Mammary epithelial cell (primary cell): ENCODE measurements at regions of chr3 and their contacts with region 1.

Region 1: DNA sequence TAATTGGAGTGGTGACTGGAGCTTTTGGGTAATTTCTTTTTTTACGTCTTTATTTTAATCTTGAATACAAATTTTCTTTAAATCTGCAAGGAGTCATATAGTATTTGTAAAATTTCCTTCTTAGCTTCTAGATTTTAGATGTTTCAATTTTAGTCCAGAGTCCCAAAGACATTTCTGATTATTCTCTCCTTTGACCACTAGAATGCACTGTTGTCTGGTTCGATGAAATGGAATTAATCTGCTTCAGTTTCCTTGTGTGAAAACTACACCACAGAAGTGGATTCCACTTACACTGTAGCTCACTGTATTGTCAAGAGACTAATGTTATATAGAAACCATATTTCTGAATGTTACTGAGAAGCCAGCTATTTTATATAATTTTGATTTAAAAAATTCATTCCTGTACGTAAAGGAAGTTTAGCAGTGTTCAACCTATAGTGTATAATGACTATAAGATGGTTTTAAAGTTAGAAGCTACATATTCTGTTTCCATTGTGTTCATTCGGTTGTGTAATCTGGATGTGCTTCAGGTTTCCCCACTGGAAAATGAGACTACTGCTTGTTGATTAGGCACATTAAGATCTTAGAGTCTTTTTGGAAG is 6.1 kb downstream of the GRAMD1C start:
- DNase-seq: peak; percentile 35
- H3K4me3 ChIP-seq: no peak overlapping the region
- H3K27ac ChIP-seq: no peak overlapping the region
- H3K4me1 ChIP-seq: peaks cover 11% of the 10 kb centered on the region
- H3K27me3 ChIP-seq: no peaks in the 10 kb centered on the region
- CTCF ChIP-seq: peak; percentile 53 to 61

Region 2: DNA sequence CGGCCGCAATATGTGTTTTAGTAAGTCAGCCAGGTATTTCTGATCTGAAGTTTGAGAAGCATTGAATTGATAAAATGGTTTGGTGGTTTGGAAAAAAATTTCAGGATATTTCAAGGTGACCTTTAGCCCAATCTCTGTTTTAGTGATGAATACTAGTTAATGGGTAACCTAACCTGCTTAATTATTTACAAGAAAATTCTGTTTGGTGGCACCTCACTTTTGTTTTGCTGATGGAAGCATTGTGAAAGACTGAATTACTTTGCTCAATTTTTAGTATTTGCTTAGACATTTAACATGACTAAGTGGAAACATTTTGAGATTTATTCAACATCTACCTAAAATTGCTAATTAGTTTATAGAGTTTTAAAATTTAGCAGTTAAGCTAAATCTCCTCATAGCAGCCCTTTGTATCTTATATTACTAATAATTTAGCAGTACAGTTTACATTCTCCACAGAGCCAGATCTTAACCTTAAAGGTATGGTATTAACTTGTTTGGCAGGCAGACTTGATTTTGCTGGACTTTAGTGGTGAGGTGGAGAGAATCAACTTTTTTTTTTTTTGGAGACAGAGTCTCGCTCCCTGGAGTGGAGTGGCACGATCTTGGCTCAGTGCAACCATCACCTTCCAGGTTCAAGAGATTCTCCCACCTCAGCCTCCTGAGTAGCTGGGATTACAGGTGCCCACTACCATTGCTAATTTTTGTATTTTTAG is 29.2 kb after region 1 on chr3:
- CTCF ChIA-PET with region 1: no interaction called
- dilution Hi-C with region 1: no loop called
- in situ Hi-C with region 1: no loop called
- intact Hi-C with region 1: no loop called
- DNase-seq: no peak
- H3K4me3 ChIP-seq: no peak overlapping the region
- H3K27ac ChIP-seq: no peak overlapping the region
- H3K4me1 ChIP-seq: no peaks in the 10 kb centered on the region
- H3K27me3 ChIP-seq: no peaks in the 10 kb centered on the region
- CTCF ChIP-seq: no peak

Region 3: GRCh38 chr3:113912552-113913236 is 68.0 kb after region 1 on chr3:
- CTCF ChIA-PET with region 1: interaction called, 5 read pairs
- dilution Hi-C with region 1: no loop called
- in situ Hi-C with region 1: loop called (anchors 5 kb)
- intact Hi-C with region 1: loop called (anchors 1 kb)
- DNase-seq: peak; percentile 78
- H3K4me3 ChIP-seq: no peak overlapping the region
- H3K27ac ChIP-seq: no peak overlapping the region
- H3K4me1 ChIP-seq: no peaks in the 10 kb centered on the region
- H3K27me3 ChIP-seq: no peaks in the 10 kb centered on the region
- CTCF ChIP-seq: peak; percentile 85 to 87

Region 4: GRCh38 chr3:114179575-114179974 is 334.9 kb after region 1 on chr3:
- CTCF ChIA-PET with region 1: no interaction called
- dilution Hi-C with region 1: no loop called
- in situ Hi-C with region 1: no loop called
- intact Hi-C with region 1: loop called (anchors 10 kb)
- DNase-seq: peak; percentile 42
- H3K4me3 ChIP-seq: no peak overlapping the region
- H3K27ac ChIP-seq: no peak overlapping the region
- H3K4me1 ChIP-seq: no peaks in the 10 kb centered on the region
- H3K27me3 ChIP-seq: no peaks in the 10 kb centered on the region
- CTCF ChIP-seq: peak; percentile 19 to 43